ENCODE measurements at regions of chr5 and their contacts with region 1.

Region 1: DNA sequence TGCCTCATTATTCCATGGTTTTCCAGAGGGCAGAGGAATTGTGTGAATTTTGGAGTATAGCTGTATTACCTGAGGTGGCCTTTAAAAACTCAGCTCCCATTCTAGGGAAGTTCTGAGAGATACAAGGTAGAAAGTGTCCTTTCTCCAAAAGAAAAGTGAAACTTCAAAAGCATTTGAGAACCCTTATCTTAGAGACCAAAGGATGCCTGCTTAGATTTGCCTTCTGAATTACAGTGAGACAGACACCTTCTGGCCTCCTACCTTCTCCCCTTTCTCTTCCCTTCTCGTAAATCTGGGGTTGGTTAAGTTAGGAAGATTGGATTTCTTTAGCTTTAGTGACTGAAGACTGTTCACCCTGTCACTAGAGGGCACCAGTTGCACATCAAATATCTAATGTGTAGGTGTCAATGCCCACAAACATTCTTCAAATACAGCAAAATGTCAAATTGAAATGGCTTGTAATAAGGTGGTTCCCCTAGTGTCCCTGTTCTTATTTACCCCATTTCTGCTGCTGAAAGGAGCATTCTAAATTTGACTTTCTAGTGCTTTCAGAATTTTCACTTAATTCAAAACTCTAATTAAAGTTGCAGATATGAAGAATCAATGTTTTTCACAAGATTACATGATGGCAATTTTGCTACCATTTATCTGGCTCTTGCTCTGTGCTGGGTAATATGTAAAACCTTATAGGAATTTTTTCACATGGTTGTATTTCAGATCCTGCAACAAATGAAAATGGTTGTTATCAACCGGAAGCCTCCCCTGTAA is 46.7 kb downstream of the PRRC1 start:
- DNase-seq: peak; percentile 42 to 57 (median 51)
- H3K4me3 ChIP-seq: no peak overlapping the region
- H3K4me3 Mint-ChIP-seq: no peak overlapping the region
- H3K27ac ChIP-seq: no peak overlapping the region
- H3K27ac Mint-ChIP-seq: no peak overlapping the region
- H3K4me1 ChIP-seq: no peaks in the 10 kb centered on the region
- H3K4me1 Mint-ChIP-seq: peaks cover 0 to 8% (median under 1%) of the 10 kb centered on the region in 4 donors
- H3K27me3 ChIP-seq: peaks cover 3% of the 10 kb centered on the region
- H3K27me3 Mint-ChIP-seq: peaks cover 4 to 27% of the 10 kb centered on the region in 2 donors

Region 2: DNA sequence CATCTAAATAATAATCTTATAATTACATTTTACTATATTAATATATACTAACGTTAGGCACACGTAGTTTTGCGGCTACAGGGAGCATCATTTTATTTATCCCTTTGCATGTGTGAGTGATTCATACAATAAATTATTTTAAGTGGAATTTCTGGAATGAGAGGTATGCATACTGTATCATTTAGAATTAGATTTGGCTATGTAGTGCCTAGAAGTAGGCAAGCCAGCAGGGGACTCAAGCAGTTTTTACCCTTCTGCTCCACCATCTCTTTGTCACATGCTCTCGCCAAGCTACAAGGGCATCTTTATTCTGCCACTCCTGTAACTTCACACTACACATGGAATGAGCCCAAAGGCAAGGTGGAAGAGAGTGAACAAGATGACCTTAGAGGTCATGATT is 212.8 kb before region 1 on chr5:
- CTCF ChIA-PET with region 1: no interaction called
- POLR2A ChIA-PET with region 1: no interaction called
- intact Hi-C with region 1: no loop called
- DNase-seq: no peak
- H3K4me3 ChIP-seq: no peak overlapping the region
- H3K4me3 Mint-ChIP-seq: no peak overlapping the region
- H3K27ac ChIP-seq: no peak overlapping the region
- H3K27ac Mint-ChIP-seq: no peak overlapping the region
- H3K4me1 ChIP-seq: no peaks in the 10 kb centered on the region
- H3K4me1 Mint-ChIP-seq: no peaks in the 10 kb centered on the region
- H3K27me3 ChIP-seq: no peaks in the 10 kb centered on the region
- H3K27me3 Mint-ChIP-seq: peaks cover 4 to 7% of the 10 kb centered on the region in 2 donors

Region 3: GRCh38 chr5:127423173-127423798 is 140.9 kb before region 1 on chr5:
- CTCF ChIA-PET with region 1: no interaction called
- POLR2A ChIA-PET with region 1: no interaction called
- intact Hi-C with region 1: no loop called
- DNase-seq: no peak
- H3K4me3 ChIP-seq: no peak overlapping the region
- H3K4me3 Mint-ChIP-seq: no peak overlapping the region
- H3K27ac ChIP-seq: no peak overlapping the region
- H3K27ac Mint-ChIP-seq: no peak overlapping the region
- H3K4me1 ChIP-seq: no peaks in the 10 kb centered on the region
- H3K4me1 Mint-ChIP-seq: peaks cover 0 to 4% (median under 1%) of the 10 kb centered on the region in 4 donors
- H3K27me3 ChIP-seq: no peaks in the 10 kb centered on the region
- H3K27me3 Mint-ChIP-seq: peaks cover 5 to 7% of the 10 kb centered on the region in 2 donors

Region 4: GRCh38 chr5:127517480-127518318 is 46.5 kb before region 1 on chr5 and contains the start of gene PRRC1:
- CTCF ChIA-PET with region 1: no interaction called
- POLR2A ChIA-PET with region 1: no interaction called
- intact Hi-C with region 1: no loop called
- DNase-seq: peak; percentile 74 to 83 (median 76)
- H3K4me3 ChIP-seq: peak within 1 kb of the TSS; percentile 79 to 97
- H3K4me3 Mint-ChIP-seq: peak within 1 kb of the TSS; percentile 87 to 93 (median 90)
- H3K27ac ChIP-seq: peak within 1 kb of the TSS; percentile 87
- H3K27ac Mint-ChIP-seq: peak within 1 kb of the TSS; percentile 70 to 93 (median 88)
- H3K4me1 ChIP-seq: peaks cover 25% of the 10 kb centered on the region
- H3K4me1 Mint-ChIP-seq: peaks cover 26 to 45% (median 34%) of the 10 kb centered on the region in 4 donors
- H3K27me3 ChIP-seq: peaks cover under 1% of the 10 kb centered on the region
- H3K27me3 Mint-ChIP-seq: peaks cover 4% of the 10 kb centered on the region in 2 donors
- total RNA-seq, gene PRRC1: 57.0 to 59.9 TPM

Region 5: DNA sequence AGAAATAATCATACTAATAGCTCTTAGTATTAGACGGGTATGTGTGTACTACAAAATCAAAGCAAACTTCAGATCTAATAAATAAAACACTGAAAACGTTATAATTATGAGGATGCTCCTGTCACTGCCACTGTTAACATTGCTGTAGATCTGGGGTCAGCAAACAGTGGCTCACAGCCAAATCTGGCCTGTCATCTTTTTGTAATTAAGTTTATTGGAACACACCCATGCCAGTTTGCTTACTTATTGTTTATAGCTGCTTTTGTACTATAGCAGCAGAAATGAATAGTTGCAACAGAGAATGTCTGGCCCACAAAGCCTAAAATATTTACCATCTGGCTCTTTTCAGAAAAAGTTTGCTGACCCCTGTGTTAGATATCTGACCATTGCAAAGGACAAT is 14.7 kb before region 1 on chr5:
- CTCF ChIA-PET with region 1: interaction called, 17 read pairs
- POLR2A ChIA-PET with region 1: no interaction called
- intact Hi-C with region 1: no loop called
- DNase-seq: no peak
- H3K4me3 ChIP-seq: no peak overlapping the region
- H3K4me3 Mint-ChIP-seq: no peak overlapping the region
- H3K27ac ChIP-seq: no peak overlapping the region
- H3K27ac Mint-ChIP-seq: no peak overlapping the region
- H3K4me1 ChIP-seq: no peaks in the 10 kb centered on the region
- H3K4me1 Mint-ChIP-seq: peaks cover 7 to 11% (median 9%) of the 10 kb centered on the region in 4 donors
- H3K27me3 ChIP-seq: no peaks in the 10 kb centered on the region
- H3K27me3 Mint-ChIP-seq: no peaks in the 10 kb centered on the region

Measured in CD4-positive, alpha-beta memory T cell (primary cell).